Activated CD4-positive, alpha-beta T cell treated with anti-CD3 and anti-CD28 coated beads for 36 hours (primary cell): ENCODE measurements at regions of chr15 and their contacts with region 1.

Region 1: DNA sequence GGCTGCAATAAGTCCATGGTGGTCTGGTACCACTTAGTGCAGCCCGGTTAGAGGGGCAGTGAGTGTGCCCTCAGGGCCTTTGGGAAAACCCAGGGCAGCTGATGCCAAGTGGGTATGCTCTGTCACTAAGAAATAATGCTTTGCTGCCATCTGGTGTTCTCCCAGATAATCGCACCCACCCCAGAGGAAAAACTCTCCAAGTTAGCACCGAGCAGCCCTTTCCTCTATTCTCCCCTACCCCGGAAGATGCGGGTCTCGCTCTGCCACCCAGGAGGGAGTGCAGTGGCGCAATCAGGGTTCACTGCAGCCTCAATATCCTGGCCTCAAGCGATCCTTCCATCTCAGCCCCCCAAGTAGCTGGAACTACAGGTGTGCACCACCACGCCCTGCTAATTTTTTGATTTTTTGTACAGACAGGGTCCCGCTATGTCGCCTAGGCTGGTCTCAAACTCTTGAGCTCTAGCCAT is 21.3 kb upstream of the DAPK2 start:
- DNase-seq: peak; percentile 78
- ATAC-seq: peak; percentile 86
- H3K4me3 Mint-ChIP-seq: no peak overlapping the region
- H3K27ac Mint-ChIP-seq: no peak overlapping the region
- H3K4me1 Mint-ChIP-seq: peaks cover 6% of the 10 kb centered on the region
- H3K27me3 Mint-ChIP-seq: no peaks in the 10 kb centered on the region

Region 2: DNA sequence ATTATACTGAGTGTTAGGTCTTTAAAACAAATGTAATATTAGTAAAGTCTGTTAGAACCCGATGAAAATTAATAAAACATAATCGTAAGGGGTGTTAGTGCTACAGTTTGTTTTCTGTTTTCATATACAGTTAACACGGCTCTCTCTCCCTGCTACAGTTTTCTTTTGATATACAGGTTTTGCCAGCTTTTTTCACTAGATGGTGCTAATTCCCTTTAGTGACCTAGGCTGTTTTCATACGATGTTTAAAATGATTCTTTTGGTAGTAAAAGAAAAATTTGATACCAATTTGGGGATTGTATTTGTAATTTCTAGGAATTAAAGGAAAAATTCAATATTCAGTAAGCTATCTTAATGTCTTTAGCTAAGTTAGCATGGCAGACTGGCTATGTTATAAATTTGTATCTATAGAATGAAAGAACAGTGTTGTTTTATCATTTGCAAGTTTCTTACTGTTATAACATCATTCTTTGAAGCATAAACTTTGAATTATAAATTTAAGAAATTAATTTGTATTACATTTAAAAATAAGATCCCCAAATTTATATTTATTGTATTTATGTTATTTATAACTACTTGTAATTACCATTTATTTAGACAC is 778.7 kb before region 1 on chr15:
- CTCF ChIA-PET with region 1: interaction called, 5 read pairs
- POLR2A ChIA-PET with region 1: no interaction called
- intact Hi-C with region 1: loop called in 1 of 2 experiments (anchors 2 kb)
- DNase-seq: no peak
- ATAC-seq: peak; percentile 81
- H3K4me3 Mint-ChIP-seq: no peak overlapping the region
- H3K27ac Mint-ChIP-seq: no peak overlapping the region
- H3K4me1 Mint-ChIP-seq: peaks cover 8% of the 10 kb centered on the region
- H3K27me3 Mint-ChIP-seq: no peaks in the 10 kb centered on the region

Region 3: GRCh38 chr15:63610200-63610841 is 457.3 kb before region 1 on chr15:
- CTCF ChIA-PET with region 1: interaction called, 15 read pairs
- POLR2A ChIA-PET with region 1: no interaction called
- intact Hi-C with region 1: loop called (anchors 1 kb)
- DNase-seq: peak; percentile 88
- ATAC-seq: peak; percentile 79
- H3K4me3 Mint-ChIP-seq: no peak overlapping the region
- H3K27ac Mint-ChIP-seq: peak overlapping the region; percentile 88
- H3K4me1 Mint-ChIP-seq: peaks cover 39% of the 10 kb centered on the region
- H3K27me3 Mint-ChIP-seq: no peaks in the 10 kb centered on the region

Region 4: DNA sequence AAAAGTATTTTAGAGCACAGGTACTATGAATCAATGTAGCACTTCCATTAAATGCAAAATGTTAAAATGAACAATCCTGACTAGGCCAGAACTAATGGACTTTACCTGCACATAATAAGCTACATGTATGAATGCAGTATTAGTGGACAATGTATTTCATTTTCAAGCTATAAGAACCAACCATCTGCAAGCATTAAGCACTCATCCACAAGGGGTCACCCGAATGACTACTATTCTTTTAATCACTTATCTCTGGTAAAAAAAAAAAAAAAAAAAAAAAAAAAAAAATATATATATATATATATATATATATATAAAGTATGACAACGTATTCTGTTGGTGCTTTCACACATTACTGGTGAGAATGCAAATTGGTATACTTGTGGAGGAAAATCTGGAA is 241.1 kb before region 1 on chr15:
- CTCF ChIA-PET with region 1: interaction called, 3 read pairs
- POLR2A ChIA-PET with region 1: no interaction called
- intact Hi-C with region 1: loop called (anchors 2 to 5 kb)
- DNase-seq: peak; percentile 41
- ATAC-seq: no peak
- H3K4me3 Mint-ChIP-seq: no peak overlapping the region
- H3K27ac Mint-ChIP-seq: peak overlapping the region; percentile 74
- H3K4me1 Mint-ChIP-seq: peaks cover 79% of the 10 kb centered on the region
- H3K27me3 Mint-ChIP-seq: no peaks in the 10 kb centered on the region

Region 5: DNA sequence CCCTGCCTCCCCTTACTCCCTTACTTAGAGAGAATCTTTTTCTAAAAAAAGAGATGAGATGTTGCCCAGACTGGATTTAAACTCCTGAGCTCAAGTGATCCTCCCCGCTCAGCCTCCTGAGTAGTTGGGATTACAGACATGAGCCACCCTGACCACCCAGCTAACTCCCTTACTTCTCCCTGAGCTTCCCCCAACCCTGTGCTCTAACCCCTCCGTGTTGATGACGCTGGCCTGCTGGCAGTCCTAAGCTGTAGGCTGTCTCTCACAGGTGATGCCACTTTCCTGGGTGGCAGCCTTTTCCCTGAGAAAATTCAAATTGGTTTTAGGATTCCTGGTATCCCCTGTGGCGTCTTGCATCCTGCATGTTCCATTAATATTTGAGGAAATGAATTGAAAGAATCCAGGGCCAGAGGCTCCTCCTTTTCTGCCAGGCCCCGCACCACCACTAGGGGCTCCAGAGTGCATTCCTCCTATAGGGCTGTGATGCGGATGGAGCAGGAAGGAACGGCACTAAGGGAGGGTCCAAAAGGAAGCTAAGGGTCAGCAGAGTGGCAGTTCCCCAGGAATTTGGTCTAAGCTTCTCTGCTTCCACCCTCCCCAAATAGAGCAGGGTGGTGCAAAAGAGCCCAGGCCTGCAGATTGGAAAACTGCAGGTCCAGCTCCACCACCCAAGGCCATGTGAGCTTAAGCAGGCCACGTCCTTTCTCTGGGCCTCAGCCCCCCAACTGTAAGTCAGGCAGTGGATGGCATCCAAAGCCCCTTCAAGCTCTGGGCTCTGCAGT is 122.4 kb before region 1 on chr15:
- CTCF ChIA-PET with region 1: interaction called, 25 read pairs
- POLR2A ChIA-PET with region 1: no interaction called
- intact Hi-C with region 1: no loop called
- DNase-seq: peak; percentile 85
- ATAC-seq: peak; percentile 97
- H3K4me3 Mint-ChIP-seq: no peak overlapping the region
- H3K27ac Mint-ChIP-seq: peak overlapping the region; percentile 51
- H3K4me1 Mint-ChIP-seq: peaks cover 4% of the 10 kb centered on the region
- H3K27me3 Mint-ChIP-seq: no peaks in the 10 kb centered on the region